Vagina (tissue), 2 donors: ENCODE measurements at regions of chr15 and their contacts with region 1.

Region 1: DNA sequence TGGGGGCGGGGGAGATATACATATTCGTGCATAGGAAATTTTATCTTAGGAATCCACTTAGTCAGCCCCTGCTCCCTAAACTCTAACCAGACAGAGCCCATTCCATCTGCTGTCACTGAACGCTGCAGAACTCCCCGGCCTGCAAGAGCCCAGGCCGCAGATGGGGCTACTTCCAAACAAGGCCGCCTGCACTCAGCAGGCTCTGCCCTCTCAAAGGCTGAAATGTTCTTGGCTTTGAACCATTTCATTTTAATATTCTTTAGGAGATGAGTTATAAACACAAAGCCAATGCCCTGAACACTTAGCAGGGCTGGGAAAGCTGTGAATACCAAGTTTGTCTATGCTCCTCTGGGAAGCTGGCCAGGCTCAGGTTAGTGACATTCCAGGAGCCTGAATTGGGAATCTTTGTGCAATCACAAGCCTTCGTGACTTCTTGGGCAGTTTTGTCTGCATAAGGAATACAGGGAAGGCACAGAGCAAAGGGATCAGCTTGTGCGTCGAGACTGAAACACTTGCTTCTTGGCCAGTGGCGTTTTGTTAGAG is 65.0 kb downstream of the SYNM start:
- DNase-seq: peak in 1 of 2 donors; percentile 46
- H3K4me3 ChIP-seq: no peak overlapping the region
- H3K27ac ChIP-seq: peak overlapping the region; percentile 81
- H3K4me1 ChIP-seq: peaks cover 13% of the 10 kb centered on the region
- H3K27me3 ChIP-seq: no peaks in the 10 kb centered on the region
- CTCF ChIP-seq: no peak
- POLR2A ChIP-seq: no peak

Region 2: GRCh38 chr15:99123706-99124451 is 46.0 kb before region 1 on chr15:
- intact Hi-C with region 1: loop called (anchors 5 kb)
- DNase-seq: peak in 1 of 2 donors; percentile 95
- H3K4me3 ChIP-seq: peak overlapping the region; percentile 13 to 16
- H3K27ac ChIP-seq: peak overlapping the region; percentile 77
- H3K4me1 ChIP-seq: peaks cover 47% of the 10 kb centered on the region
- H3K27me3 ChIP-seq: no peaks in the 10 kb centered on the region
- CTCF ChIP-seq: peak in 1 of 3 experiments; percentile 10
- POLR2A ChIP-seq: no peak